HCT116 (cell line): ENCODE measurements at regions of chr4 and their contacts with region 1.

Region 1: GRCh38 chr4:131091896-131092295 is 1995.9 kb downstream of the C4orf33 start:
- DNase-seq: peak; percentile 48
- ATAC-seq: peak; percentile 68
- H3K4me3 ChIP-seq: no peak overlapping the region
- H3K27ac ChIP-seq: no peak overlapping the region
- H3K4me1 ChIP-seq: no peaks in the 10 kb centered on the region
- H3K27me3 ChIP-seq: no peaks in the 10 kb centered on the region
- CTCF ChIP-seq: peak; percentile 22 to 63 (median 51); a peak in 4 of 6 replicates
- POLR2A ChIP-seq: no peak
- RAD21 ChIP-seq: peak; percentile 70

Region 2: DNA sequence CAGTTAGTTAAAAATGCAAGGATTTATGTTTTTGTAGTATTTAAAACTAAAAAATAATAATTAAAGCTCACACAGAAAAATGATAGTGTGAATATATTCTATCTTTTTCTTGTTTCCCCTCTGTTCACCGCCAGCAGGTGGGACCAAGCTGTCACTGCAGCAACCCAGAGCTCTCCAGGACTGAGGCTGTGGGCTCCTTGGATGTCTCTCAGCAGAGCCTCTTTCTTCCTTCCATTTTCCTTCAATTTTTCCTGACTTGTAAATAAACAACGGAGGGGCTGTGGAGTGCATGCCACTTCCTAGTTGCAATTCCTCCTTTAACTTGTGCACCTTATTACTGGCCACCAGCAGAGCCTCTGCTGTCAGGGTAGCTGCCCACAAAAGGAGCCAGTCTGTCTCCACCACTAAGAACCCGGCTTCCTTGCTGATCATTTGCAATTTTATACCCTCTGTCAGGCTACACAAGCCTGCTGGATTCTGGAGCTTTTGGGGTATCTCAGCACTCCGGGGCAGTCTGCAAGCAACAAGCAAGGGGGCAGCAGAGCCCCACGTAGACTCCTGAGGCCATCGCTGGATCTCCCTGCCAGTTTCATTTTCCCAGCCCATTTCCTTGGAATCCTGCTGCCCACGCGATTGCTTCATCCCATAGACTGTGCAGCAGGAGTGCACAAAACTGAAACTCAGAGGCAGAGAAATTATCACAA is 528.6 kb before region 1 on chr4:
- CTCF ChIA-PET with region 1: interaction called, 3 read pairs
- POLR2A ChIA-PET with region 1: no interaction called
- RAD21 ChIA-PET with region 1: no interaction called
- intact Hi-C with region 1: loop called (anchors 5 kb)
- DNase-seq: peak; percentile 66
- ATAC-seq: peak; percentile 96
- H3K4me3 ChIP-seq: peak overlapping the region; percentile 36 to 58
- H3K27ac ChIP-seq: no peak overlapping the region
- H3K4me1 ChIP-seq: peaks cover 0 to 13% of the 10 kb centered on the region in 2 experiments; a peak in 2 of 4 replicates
- H3K27me3 ChIP-seq: no peaks in the 10 kb centered on the region
- CTCF ChIP-seq: peak; percentile 34 to 81 (median 76); a peak in 5 of 6 replicates
- POLR2A ChIP-seq: no peak
- RAD21 ChIP-seq: peak; percentile 86

Region 3: GRCh38 chr4:131026771-131027170 is 65.1 kb before region 1 on chr4:
- CTCF ChIA-PET with region 1: no interaction called
- POLR2A ChIA-PET with region 1: no interaction called
- RAD21 ChIA-PET with region 1: no interaction called
- intact Hi-C with region 1: no loop called
- DNase-seq: no peak
- ATAC-seq: no peak
- H3K4me3 ChIP-seq: no peak overlapping the region
- H3K27ac ChIP-seq: no peak overlapping the region
- H3K4me1 ChIP-seq: no peaks in the 10 kb centered on the region
- H3K27me3 ChIP-seq: no peaks in the 10 kb centered on the region
- CTCF ChIP-seq: no peak
- POLR2A ChIP-seq: no peak
- RAD21 ChIP-seq: no peak

Region 4: DNA sequence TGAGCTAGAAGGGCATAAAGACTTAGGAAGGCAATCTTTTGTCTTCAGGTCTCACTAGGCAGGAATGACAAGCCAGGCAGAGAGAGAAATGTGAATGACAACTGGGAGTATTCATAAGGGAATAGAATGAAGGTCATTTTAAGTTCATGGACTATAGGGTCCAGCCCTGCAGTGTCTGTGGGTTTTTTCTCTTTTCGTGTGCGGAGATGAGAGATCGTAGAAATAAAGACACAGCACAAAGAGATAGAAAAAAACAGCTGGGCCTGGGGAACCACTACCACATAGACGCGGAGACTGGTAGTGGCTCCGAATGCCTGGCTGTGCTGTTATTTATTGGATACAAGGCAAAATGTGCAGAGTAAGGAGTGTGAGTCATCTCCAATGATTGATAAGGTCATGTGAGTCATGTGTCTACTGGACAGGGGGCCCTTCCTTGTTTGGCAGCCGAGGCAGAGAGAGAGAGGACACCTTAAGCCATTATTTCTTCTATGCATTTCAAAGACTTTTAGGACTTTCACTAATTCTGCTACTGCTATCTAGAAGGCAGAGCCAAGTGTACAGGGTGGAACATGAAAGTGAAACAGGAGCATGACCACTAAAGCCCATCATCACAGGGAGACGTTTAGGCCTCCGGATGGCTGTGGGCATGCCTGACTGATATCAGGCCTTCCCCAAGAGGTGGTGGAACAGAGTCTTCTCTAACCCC is 1135.4 kb after region 1 on chr4:
- CTCF ChIA-PET with region 1: interaction called, 3 read pairs
- POLR2A ChIA-PET with region 1: no interaction called
- RAD21 ChIA-PET with region 1: no interaction called
- intact Hi-C with region 1: loop called (anchors 5 kb)
- DNase-seq: no peak
- ATAC-seq: peak; percentile 75
- H3K4me3 ChIP-seq: peak overlapping the region; percentile 23 to 41; a peak in 3 of 4 replicates
- H3K27ac ChIP-seq: no peak overlapping the region
- H3K4me1 ChIP-seq: peaks cover 0 to 8% of the 10 kb centered on the region in 2 experiments; a peak in 2 of 4 replicates
- H3K27me3 ChIP-seq: no peaks in the 10 kb centered on the region
- CTCF ChIP-seq: no peak
- POLR2A ChIP-seq: no peak
- RAD21 ChIP-seq: no peak

Region 5: GRCh38 chr4:132614682-132615081 is 1522.8 kb after region 1 on chr4:
- CTCF ChIA-PET with region 1: no interaction called
- POLR2A ChIA-PET with region 1: no interaction called
- RAD21 ChIA-PET with region 1: no interaction called
- intact Hi-C with region 1: loop called (anchors 10 kb)
- DNase-seq: no peak
- ATAC-seq: no peak
- H3K4me3 ChIP-seq: no peak overlapping the region
- H3K27ac ChIP-seq: no peak overlapping the region
- H3K4me1 ChIP-seq: no peaks in the 10 kb centered on the region
- H3K27me3 ChIP-seq: no peaks in the 10 kb centered on the region
- CTCF ChIP-seq: peak; percentile 30 to 54 (median 31); a peak in 4 of 6 replicates
- POLR2A ChIP-seq: no peak
- RAD21 ChIP-seq: peak; percentile 39; the same call in 1 of the 2 replicates

Region 6: GRCh38 chr4:132642016-132642817 is 1550.3 kb after region 1 on chr4:
- CTCF ChIA-PET with region 1: no interaction called
- POLR2A ChIA-PET with region 1: no interaction called
- RAD21 ChIA-PET with region 1: no interaction called
- intact Hi-C with region 1: loop called (anchors 2 kb)
- DNase-seq: peak; percentile 48
- ATAC-seq: peak; percentile 71
- H3K4me3 ChIP-seq: no peak overlapping the region
- H3K27ac ChIP-seq: no peak overlapping the region
- H3K4me1 ChIP-seq: no peaks in the 10 kb centered on the region
- H3K27me3 ChIP-seq: no peaks in the 10 kb centered on the region
- CTCF ChIP-seq: peak; percentile 48 to 88 (median 71); a peak in 5 of 6 replicates
- POLR2A ChIP-seq: no peak
- RAD21 ChIP-seq: peak; percentile 79